Mammary epithelial cell (primary cell): ENCODE measurements at regions of chr2 and their contacts with region 1.

Region 1: GRCh38 chr2:37767956-37768925 is 96.8 kb upstream of the CDC42EP3 start:
- DNase-seq: peak; percentile 66
- H3K4me3 ChIP-seq: no peak overlapping the region
- H3K27ac ChIP-seq: peak overlapping the region; percentile 27
- H3K4me1 ChIP-seq: peaks cover 31% of the 10 kb centered on the region
- H3K27me3 ChIP-seq: no peaks in the 10 kb centered on the region
- CTCF ChIP-seq: no peak

Region 2: GRCh38 chr2:37802899-37803379 is 34.7 kb after region 1 on chr2:
- CTCF ChIA-PET with region 1: no interaction called
- dilution Hi-C with region 1: no loop called
- in situ Hi-C with region 1: no loop called
- intact Hi-C with region 1: loop called (anchors 2 kb)
- DNase-seq: peak; percentile 76
- H3K4me3 ChIP-seq: no peak overlapping the region
- H3K27ac ChIP-seq: no peak overlapping the region
- H3K4me1 ChIP-seq: peaks cover 20% of the 10 kb centered on the region
- H3K27me3 ChIP-seq: no peaks in the 10 kb centered on the region
- CTCF ChIP-seq: no peak